Right lobe of liver (tissue), 6 donors: ENCODE measurements at regions of chr6 and their contacts with region 1.

Region 1: GRCh38 chr6:29834564-29835436 is 7.2 kb downstream of the HLA-G start:
- DNase-seq: peak in 1 of 3 donors; percentile 47
- ATAC-seq: peak; percentile 61 to 82 (median 74)
- H3K4me3 ChIP-seq: no peak overlapping the region
- H3K27ac ChIP-seq: no peak overlapping the region
- H3K4me1 ChIP-seq: no peaks in the 10 kb centered on the region
- H3K27me3 ChIP-seq: peaks cover 0 to 4% of the 10 kb centered on the region in 2 donors
- CTCF ChIP-seq: peak; percentile 73 to 92 (median 90)
- POLR2A ChIP-seq: no peak

Region 2: DNA sequence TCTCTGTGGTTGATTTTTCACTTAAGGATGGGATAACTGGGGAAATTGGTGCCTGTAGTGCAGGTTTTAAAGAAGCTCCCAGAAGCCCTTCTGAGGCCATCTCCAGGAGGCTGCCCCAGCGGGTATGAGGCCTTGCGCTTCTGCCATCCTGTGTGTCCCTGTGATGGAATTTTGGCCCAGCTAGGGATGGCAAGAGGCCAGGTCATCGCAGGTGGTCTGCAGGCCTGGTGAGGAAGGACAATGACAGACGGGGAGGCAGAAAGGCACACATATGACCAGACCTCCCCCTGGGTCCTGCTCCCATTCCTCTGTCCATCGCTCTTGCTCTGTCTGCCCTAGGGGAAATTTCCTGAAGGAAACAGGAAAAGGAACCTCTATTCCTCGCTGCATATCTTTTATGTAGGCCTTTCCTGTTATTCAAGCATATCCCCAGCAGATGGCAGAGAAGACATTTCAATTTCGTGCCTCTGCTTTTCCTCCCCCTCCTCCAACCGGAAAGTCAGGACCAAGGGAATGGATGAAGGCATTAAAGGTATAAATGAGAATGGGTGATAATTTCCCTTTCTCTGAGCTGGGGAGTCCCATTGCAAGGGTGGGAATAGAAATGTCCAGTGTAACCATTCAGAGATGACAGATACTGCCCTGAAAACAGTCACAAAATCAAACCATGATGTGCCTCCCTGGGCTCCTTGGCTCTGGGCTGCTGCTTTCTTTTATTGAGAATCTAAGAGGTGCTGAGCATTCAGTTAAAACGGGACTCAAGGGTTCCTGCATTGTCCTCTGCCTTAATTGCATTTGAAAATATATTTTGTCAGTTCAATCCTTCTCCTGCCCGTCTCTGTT is 129.2 kb before region 1 on chr6:
- intact Hi-C with region 1: loop called (anchors 5 to 10 kb)
- DNase-seq: no peak
- ATAC-seq: peak; percentile 80 to 94 (median 85)
- H3K4me3 ChIP-seq: no peak overlapping the region
- H3K27ac ChIP-seq: no peak overlapping the region
- H3K4me1 ChIP-seq: peaks cover 0 to 3% (median 0%) of the 10 kb centered on the region in 4 donors
- H3K27me3 ChIP-seq: no peaks in the 10 kb centered on the region
- CTCF ChIP-seq: peak; percentile 57 to 69 (median 60)
- POLR2A ChIP-seq: no peak

Region 3: GRCh38 chr6:29743568-29743967 is 91.2 kb before region 1 on chr6:
- intact Hi-C with region 1: loop called in 1 of 2 experiments (anchors 5 kb)
- DNase-seq: peak in 1 of 3 donors; percentile 20
- ATAC-seq: no peak
- H3K4me3 ChIP-seq: no peak overlapping the region
- H3K27ac ChIP-seq: no peak overlapping the region
- H3K4me1 ChIP-seq: no peaks in the 10 kb centered on the region
- H3K27me3 ChIP-seq: no peaks in the 10 kb centered on the region
- CTCF ChIP-seq: no peak
- POLR2A ChIP-seq: no peak

Region 4: GRCh38 chr6:29953001-29953441 is 118.2 kb after region 1 on chr6:
- intact Hi-C with region 1: no loop called
- DNase-seq: no peak
- ATAC-seq: no peak
- H3K4me3 ChIP-seq: no peak overlapping the region
- H3K27ac ChIP-seq: no peak overlapping the region
- H3K4me1 ChIP-seq: no peaks in the 10 kb centered on the region
- H3K27me3 ChIP-seq: no peaks in the 10 kb centered on the region
- CTCF ChIP-seq: no peak
- POLR2A ChIP-seq: no peak